Activated CD4-positive, alpha-beta T cell treated with anti-CD3 and anti-CD28 coated beads, Interleukin-2, amount 10 ng/mL, durations not matched to agents 7 days and 5 days (primary cell): ENCODE measurements at regions of chr19 and their contacts with region 1.

Region 1: DNA sequence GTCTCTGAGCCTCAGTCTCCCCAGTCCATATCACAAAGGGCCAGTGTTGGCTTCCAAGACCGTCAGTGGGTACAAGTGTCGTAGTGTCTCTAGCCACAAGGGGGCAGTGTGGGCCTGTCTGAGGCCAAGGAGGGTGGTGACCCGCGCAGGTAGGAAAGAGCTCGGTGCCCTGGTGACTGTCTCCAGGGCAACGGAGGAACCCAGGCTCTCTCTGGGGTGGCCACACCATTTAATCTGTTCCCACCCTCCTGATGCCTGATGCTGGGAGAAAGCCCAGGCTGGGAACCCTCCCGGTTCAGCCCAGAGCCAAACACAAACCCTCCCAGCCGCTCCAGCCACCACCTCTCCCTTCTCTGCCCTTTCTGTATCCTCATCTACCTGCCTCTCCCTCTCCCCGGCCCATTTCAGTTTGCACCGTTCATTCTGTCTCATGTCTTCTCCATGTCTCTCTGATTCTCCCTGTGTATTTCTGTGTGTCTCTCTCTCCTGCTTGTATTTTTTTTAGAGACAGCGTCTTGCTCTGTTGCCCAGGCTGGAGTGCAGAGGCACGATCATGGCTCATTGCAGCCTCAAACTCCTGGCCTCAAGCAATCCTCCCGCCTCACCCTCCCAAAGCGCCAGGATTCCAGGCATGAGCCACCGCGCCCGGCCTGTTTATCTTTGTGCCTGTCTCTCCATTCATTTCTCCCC is 17.5 kb upstream of the MEIS3 start:
- DNase-seq: peak; percentile 88
- H3K4me3 Mint-ChIP-seq: no peak overlapping the region
- H3K27ac Mint-ChIP-seq: peak overlapping the region; percentile 36
- H3K4me1 Mint-ChIP-seq: peaks cover 48% of the 10 kb centered on the region
- H3K27me3 Mint-ChIP-seq: peaks cover 15% of the 10 kb centered on the region

Region 2: GRCh38 chr19:47447470-47448359 is 10.9 kb after region 1 on chr19:
- CTCF ChIA-PET with region 1: interaction called, 26 read pairs
- POLR2A ChIA-PET with region 1: no interaction called
- DNase-seq: peak; percentile 72
- H3K4me3 Mint-ChIP-seq: peak overlapping the region; percentile 1
- H3K27ac Mint-ChIP-seq: peak overlapping the region; percentile 76
- H3K4me1 Mint-ChIP-seq: peaks cover 47% of the 10 kb centered on the region
- H3K27me3 Mint-ChIP-seq: peaks cover 72% of the 10 kb centered on the region

Region 3: DNA sequence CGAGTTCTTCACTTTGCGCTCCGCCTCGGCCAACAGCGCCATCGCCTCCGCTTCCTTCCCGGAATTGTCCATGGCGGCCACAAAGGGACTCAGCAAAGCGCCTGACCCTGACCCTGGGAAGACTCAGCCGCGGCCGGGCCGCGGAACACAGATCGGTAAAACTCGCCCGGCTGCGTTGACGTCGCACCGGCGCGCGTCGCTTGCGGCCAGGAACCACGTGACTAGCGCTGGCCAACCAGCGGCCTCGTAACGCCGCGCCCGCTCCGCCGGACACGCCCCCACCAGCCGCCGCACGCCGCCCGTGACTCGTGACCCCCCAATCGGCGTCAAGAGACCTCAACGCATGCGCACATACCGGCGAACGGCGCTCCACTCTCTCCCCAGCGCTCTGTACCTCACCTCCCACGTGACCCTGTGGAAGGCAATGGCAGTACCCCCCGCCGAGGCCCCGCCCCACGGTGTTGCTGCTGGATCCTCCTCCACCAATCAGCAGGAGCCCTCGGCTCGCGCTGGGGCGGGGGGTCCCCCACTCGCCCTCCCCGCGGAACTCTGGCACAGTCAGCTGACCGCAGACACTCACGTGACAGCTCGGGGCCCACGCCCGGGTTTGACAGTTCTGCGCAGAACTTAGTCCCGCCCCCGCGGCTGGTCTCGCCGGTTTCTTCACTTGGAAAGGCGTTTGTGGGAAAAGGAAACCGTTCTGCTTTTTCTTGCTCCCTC is 78.2 kb after region 1 on chr19 and contains the start of gene NAPA:
- CTCF ChIA-PET with region 1: interaction called, 12 read pairs
- POLR2A ChIA-PET with region 1: no interaction called
- DNase-seq: peak; percentile 100
- H3K4me3 Mint-ChIP-seq: peak within 1 kb of the TSS; percentile 90
- H3K27ac Mint-ChIP-seq: peak within 1 kb of the TSS; percentile 99
- H3K4me1 Mint-ChIP-seq: peaks cover 88% of the 10 kb centered on the region
- H3K27me3 Mint-ChIP-seq: no peaks in the 10 kb centered on the region
- total RNA-seq, gene NAPA: 121 to 133 TPM

Region 4: DNA sequence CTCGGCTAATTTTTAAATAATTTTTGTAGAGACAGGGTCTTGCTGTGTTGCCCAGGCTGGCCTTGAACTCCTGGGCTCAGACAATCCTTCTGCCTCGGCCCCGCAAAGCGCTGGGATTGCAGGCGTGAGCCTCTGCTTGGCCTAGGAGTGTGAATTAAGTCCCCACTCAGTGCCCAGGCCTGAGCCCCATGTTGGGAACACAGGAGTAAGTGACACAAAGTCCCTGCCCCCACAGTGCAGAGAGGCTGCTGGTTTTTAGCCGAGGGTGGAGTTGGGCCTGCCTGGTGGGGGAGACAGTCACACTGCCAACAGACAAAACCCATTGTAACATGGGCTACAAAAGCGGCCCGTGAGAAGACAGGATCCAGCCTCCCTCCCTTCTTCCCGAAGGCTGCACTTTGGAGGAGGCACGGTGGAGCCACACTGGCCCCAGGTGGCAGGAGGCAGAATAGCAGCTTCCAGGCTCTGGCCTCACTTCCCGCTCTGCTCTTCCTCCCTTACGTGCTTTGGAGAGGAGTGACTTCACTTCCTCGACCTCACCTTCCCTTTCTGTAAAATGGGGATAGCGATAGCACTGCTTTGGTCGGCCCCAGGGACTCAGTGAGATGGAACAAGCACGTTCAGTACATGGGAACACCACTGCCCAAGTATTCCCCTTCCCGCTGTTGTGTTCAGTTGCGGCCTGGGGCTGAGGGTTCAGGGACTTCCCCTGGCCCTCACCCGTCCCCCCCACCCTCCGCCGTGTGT is 261.2 kb after region 1 on chr19:
- CTCF ChIA-PET with region 1: interaction called, 14 read pairs
- POLR2A ChIA-PET with region 1: no interaction called
- DNase-seq: peak; percentile 65
- H3K4me3 Mint-ChIP-seq: no peak overlapping the region
- H3K27ac Mint-ChIP-seq: no peak overlapping the region
- H3K4me1 Mint-ChIP-seq: no peaks in the 10 kb centered on the region
- H3K27me3 Mint-ChIP-seq: no peaks in the 10 kb centered on the region

Region 5: DNA sequence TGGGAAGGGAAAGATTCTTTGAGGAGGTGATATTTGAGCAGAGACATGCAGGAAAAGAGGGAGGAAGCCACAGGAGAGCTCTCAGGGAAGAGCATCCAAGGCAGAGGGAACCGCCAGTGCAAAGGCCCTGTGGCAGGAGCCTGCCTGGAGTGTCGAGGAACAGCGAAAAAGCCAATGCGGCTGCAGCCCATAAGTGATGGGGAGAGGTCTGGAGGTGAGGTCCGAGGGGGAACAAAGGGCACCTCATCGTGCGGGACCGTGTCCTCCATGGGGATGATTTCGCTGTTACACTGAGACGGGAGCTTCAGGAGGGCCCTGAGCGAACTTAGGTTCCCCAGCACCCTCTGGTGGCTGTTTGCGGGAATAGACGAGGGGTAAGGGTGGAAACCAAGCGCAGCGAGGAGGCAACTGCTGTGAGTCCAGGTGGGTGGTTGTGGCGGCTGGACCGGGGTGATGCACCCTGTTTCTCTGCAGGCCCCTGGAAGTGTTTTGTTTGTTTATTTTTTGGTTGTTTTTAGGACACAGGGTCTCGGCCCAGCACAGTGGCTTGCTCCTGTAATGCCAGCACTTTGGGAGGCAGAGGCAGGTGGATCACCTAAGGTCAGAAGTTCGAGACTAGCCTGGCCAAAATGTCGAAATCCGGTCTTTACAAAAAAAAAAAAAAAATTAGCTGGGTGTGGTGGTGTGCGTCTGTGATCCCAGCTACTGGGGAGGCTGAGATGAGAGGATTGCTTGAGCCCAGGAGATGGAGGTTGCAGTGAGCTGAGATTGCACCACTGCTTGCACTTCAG is 270.5 kb after region 1 on chr19:
- CTCF ChIA-PET with region 1: interaction called, 64 read pairs
- POLR2A ChIA-PET with region 1: interaction called, 3 read pairs
- DNase-seq: peak; percentile 83
- H3K4me3 Mint-ChIP-seq: no peak overlapping the region
- H3K27ac Mint-ChIP-seq: no peak overlapping the region
- H3K4me1 Mint-ChIP-seq: no peaks in the 10 kb centered on the region
- H3K27me3 Mint-ChIP-seq: peaks cover 5% of the 10 kb centered on the region